ENCODE measurements at regions of chr20 and their contacts with region 1.

Region 1: GRCh38 chr20:49245921-49246740 is 26.9 kb downstream of the DDX27 start:
- DNase-seq: peak; percentile 32
- H3K4me3 Mint-ChIP-seq: no peak overlapping the region
- H3K27ac Mint-ChIP-seq: peak overlapping the region; percentile 55
- H3K4me1 Mint-ChIP-seq: peaks cover 2% of the 10 kb centered on the region
- H3K27me3 Mint-ChIP-seq: no peaks in the 10 kb centered on the region

Region 2: GRCh38 chr20:49096203-49096730 is 149.9 kb before region 1 on chr20:
- CTCF ChIA-PET with region 1: no interaction called
- DNase-seq: no peak
- H3K4me3 Mint-ChIP-seq: no peak overlapping the region
- H3K27ac Mint-ChIP-seq: peak overlapping the region; percentile 64
- H3K4me1 Mint-ChIP-seq: peaks cover 12% of the 10 kb centered on the region
- H3K27me3 Mint-ChIP-seq: no peaks in the 10 kb centered on the region

Region 3: DNA sequence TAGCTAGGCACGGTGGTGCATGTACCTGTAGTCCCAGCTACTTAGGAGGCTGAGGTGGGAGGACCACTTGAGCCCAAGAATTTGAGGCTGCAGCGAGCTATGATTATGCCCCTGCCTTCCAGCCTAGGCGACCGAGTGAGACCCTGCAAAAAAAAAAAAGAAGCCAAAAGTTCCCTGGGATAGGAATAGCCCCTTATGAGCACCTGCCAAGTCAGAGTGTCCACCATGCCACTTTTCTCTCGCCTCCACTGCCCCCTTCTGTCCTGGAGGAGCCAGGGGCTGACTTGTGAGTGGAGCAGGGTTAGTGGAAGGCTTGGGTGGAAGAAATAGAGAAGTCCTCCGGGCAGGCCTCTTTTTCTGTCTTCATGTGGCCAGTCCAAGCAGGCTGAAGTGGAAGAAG is 39.1 kb before region 1 on chr20:
- CTCF ChIA-PET with region 1: no interaction called
- DNase-seq: peak; percentile 26
- H3K4me3 Mint-ChIP-seq: no peak overlapping the region
- H3K27ac Mint-ChIP-seq: no peak overlapping the region
- H3K4me1 Mint-ChIP-seq: no peaks in the 10 kb centered on the region
- H3K27me3 Mint-ChIP-seq: peaks cover 6% of the 10 kb centered on the region

Region 4: DNA sequence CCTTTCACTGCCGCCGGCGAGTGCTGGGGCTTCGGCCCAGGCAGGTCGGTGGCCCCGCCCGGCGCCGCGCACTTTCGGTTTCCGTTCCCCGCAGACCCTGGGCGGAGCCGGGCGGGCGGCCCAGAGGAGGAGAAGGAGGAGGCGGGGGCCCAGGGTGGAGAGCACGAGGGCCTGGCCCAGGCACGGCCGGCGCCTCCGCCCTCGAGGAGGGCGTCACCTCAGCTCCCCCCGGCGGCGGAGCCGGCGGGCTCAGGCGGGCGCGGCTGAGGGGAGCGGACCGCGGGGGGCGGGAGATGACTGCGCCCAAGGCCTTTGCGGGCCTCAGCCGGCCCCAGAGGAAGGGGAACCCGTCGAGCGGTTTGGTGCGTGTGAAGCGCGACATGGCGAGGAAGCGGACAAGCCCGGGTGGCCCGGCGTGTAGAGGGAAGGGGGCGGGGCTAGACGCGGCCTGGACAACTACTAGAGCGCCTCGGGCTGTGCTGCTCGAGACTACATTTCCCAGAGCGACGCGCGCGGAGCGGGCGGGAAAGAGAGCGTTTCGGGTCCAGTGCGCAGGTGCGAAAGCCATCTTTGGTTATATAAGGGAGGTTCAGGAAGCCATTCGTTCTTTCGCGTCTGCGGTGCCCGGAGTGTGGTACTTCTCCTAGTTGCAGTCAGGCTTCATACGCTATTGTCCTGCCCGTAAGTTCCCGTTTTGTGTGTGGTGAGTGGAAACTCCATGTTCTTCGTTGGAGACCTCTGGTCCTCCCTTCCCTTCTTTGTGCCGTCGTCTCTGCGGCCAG is 32.1 kb after region 1 on chr20 and contains the start of gene ZNFX1:
- CTCF ChIA-PET with region 1: no interaction called
- DNase-seq: peak; percentile 99
- H3K4me3 Mint-ChIP-seq: peak within 1 kb of the TSS; percentile 99
- H3K27ac Mint-ChIP-seq: peak within 1 kb of the TSS; percentile 96
- H3K4me1 Mint-ChIP-seq: peaks cover 65% of the 10 kb centered on the region
- H3K27me3 Mint-ChIP-seq: no peaks in the 10 kb centered on the region

Region 5: GRCh38 chr20:49323622-49324238 is 77.6 kb after region 1 on chr20:
- CTCF ChIA-PET with region 1: interaction called, 15 read pairs
- DNase-seq: peak; percentile 46
- H3K4me3 Mint-ChIP-seq: no peak overlapping the region
- H3K27ac Mint-ChIP-seq: peak overlapping the region; percentile 76
- H3K4me1 Mint-ChIP-seq: peaks cover 29% of the 10 kb centered on the region
- H3K27me3 Mint-ChIP-seq: peaks cover 64% of the 10 kb centered on the region

Region 6: DNA sequence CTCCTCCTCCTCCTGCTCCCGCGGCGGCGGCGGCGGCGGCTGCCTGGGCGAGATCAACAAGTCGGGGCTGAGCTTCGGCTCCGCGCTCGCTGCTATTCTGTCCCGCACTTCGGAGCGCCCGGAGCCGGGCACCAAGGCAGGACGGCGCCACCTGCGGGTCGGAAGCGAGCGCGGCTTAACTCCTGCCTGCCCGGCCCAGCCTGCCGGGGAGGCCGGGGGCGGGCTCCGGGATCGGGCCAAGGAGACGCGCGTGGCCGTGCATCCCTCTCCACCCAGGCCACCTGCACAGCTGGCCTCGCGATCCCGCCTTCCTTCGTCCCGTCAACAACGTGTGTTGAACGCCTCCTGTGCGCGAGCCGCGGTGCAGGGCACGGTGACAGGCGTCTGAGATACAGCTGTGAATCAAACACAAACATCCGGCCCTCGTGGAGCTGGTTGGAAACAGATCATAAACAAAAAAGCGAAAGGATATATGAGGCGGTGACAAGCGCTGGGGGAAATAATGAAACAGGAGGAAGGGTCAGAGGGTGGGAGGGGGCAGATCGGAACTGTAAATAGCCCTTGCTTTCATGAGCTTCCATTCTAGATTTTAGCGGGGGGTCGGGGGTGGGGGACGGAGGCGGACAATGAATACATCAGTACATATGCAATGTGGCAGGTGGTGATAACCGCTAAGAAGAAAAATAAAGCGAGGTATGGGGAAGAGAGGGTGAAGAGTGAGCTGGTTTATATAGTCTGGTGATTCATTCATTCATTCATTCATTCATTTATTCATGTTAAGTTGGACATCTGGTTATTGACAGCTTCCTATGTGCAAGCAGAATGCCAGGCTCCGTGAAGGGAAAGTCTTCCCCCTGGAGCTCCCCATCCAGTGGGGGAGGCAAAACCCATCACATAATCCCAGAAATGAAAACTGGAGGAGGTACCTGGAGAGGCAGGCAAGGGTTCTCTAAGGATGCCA is 238.3 kb after region 1 on chr20:
- CTCF ChIA-PET with region 1: no interaction called
- DNase-seq: peak; percentile 77
- H3K4me3 Mint-ChIP-seq: peak overlapping the region; percentile 70
- H3K27ac Mint-ChIP-seq: no peak overlapping the region
- H3K4me1 Mint-ChIP-seq: peaks cover 11% of the 10 kb centered on the region
- H3K27me3 Mint-ChIP-seq: peaks cover 87% of the 10 kb centered on the region